ENCODE measurements at regions of chr19 and their contacts with region 1.

Region 1: DNA sequence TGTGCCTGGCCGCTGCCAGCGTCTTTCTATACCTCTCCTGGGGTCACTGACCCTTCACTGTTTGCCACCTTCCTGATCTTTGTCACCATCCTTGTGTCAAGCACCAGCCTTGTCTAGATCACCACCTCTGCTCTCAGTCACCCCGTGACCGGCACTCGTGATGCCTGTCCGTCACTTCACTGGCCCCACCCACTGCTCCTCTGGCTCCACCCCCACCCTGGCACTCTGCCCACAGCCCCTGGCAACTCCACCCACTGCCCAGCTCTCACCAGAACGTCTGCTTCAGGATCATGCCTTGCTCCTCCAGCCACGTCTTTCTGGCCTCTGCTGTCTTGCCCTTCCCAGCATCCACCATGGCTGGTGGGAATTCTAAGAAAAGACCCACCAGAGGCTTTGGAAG is 24.8 kb upstream of the PLA2G4C start:
- DNase-seq: no peak

Region 2: GRCh38 chr19:47994209-47994802 is 141.1 kb before region 1 on chr19 and contains the start of gene ELSPBP1:
- intact Hi-C with region 1: loop called in 1 of 2 experiments (anchors 10 kb)
- DNase-seq: no peak
- total RNA-seq, gene ELSPBP1: not detected

Region 3: DNA sequence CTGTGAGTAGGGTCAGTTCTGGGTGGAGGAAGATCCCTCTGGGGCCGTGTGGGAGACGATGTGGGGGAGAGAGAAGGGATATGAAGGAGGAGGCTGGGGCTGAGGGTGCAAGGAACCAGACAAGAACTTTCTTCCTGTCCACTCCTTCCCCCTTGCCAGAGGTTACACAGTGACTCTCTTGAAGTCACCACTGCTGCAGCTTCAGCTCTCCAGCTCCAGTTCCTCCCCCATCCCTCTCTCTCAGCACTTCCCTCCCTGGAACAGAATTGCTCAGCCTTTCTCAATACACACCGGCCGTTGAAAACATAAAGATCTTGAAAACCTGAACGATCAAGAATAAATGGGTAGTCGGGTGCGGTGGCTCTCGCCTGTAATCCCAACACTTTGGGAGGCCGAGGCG is 40.2 kb after region 1 on chr19:
- intact Hi-C with region 1: no loop called
- DNase-seq: no peak

Region 4: GRCh38 chr19:48203732-48204628 is 68.6 kb after region 1 on chr19:
- intact Hi-C with region 1: no loop called
- DNase-seq: peak; percentile 97